ENCODE measurements at regions of chrX and their contacts with region 1.

Region 1: DNA sequence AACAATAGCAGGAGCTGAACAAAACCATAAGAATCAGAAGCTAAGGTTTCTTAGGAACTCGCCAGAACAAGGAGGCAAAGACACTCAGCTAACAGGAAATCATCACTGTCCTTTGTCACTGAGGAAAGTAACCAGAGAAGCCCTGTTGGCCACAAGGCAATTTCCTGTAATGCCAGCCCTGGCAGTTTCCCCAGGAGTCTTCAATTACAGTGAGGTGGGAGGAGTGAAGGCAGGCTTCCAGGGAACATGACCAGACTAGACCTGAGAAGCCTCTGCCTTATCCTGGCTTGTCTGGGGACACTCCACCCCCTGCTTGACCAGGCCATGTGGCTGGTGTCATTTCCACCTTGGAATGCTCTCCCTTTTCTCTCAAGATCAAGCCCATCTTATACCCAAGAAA is 125.3 kb downstream of the COL4A6 start:
- DNase-seq: no peak
- ATAC-seq: no peak
- H3K4me3 ChIP-seq: no peak overlapping the region
- H3K27ac ChIP-seq: no peak overlapping the region
- H3K4me1 ChIP-seq: no peaks in the 10 kb centered on the region
- H3K27me3 ChIP-seq: no peaks in the 10 kb centered on the region
- CTCF ChIP-seq: no peak
- EP300 ChIP-seq: no peak
- POLR2A ChIP-seq: no peak
- RAD21 ChIP-seq: no peak

Region 2: GRCh38 chrX:106976416-106976815 is 1336.5 kb before region 1 on chrX:
- CTCF ChIA-PET with region 1: no interaction called
- POLR2A ChIA-PET with region 1: no interaction called
- RAD21 ChIA-PET with region 1: no interaction called
- SMC1A ChIA-PET with region 1: no interaction called
- in situ Hi-C with region 1: no loop called
- intact Hi-C with region 1: no loop called
- DNase-seq: no peak
- ATAC-seq: no peak
- H3K4me3 ChIP-seq: no peak overlapping the region
- H3K27ac ChIP-seq: no peak overlapping the region
- H3K4me1 ChIP-seq: no peaks in the 10 kb centered on the region
- H3K27me3 ChIP-seq: no peaks in the 10 kb centered on the region
- CTCF ChIP-seq: no peak
- EP300 ChIP-seq: no peak
- POLR2A ChIP-seq: no peak
- RAD21 ChIP-seq: no peak

Region 3: DNA sequence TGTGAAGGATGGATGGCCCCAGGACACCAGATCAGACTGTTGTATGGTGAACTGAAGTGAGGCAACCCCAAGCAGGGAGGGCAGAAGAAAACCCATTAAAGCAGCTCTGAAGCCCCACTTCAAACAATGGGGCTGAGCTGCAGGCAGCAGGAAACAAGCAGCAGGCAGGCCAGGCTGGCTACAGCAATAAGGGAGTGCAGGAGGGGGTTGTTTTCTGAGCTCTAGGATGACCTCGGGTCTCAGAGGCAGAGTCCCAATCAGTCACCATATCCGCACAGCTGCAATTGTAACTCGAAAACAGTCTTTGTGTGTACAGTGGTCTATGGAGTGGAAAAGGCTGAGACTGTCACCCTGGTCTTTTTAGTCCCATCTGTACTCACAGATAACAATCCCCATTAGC is 34.9 kb after region 1 on chrX:
- CTCF ChIA-PET with region 1: no interaction called
- POLR2A ChIA-PET with region 1: no interaction called
- RAD21 ChIA-PET with region 1: no interaction called
- SMC1A ChIA-PET with region 1: no interaction called
- in situ Hi-C with region 1: no loop called
- intact Hi-C with region 1: loop called (anchors 1 kb)
- DNase-seq: no peak
- ATAC-seq: no peak
- H3K4me3 ChIP-seq: no peak overlapping the region
- H3K27ac ChIP-seq: no peak overlapping the region
- H3K4me1 ChIP-seq: no peaks in the 10 kb centered on the region
- H3K27me3 ChIP-seq: no peaks in the 10 kb centered on the region
- CTCF ChIP-seq: no peak
- EP300 ChIP-seq: no peak
- POLR2A ChIP-seq: no peak
- RAD21 ChIP-seq: no peak

Region 4: DNA sequence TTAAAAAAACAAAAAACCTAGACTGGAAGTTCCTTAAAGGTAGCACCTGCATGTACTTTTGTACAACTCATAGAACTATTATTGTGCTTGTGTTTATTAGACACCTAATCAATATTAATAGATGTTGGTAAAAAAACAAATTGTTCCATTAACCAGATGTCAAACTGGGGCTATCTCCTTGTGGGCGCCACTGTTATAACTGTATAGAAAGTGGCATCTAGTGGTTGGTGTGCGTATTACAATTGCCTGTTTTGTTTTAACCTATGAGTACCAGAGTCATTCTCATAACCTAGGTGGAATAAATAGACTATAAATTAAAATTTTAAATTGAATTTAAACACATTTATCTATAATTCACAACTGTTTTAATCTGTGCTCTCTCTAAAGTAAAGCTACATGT is 224.1 kb after region 1 on chrX:
- CTCF ChIA-PET with region 1: no interaction called
- POLR2A ChIA-PET with region 1: no interaction called
- RAD21 ChIA-PET with region 1: no interaction called
- SMC1A ChIA-PET with region 1: no interaction called
- in situ Hi-C with region 1: no loop called
- intact Hi-C with region 1: loop called (anchors 5 kb)
- DNase-seq: no peak
- ATAC-seq: peak; percentile 90
- H3K4me3 ChIP-seq: no peak overlapping the region
- H3K27ac ChIP-seq: no peak overlapping the region
- H3K4me1 ChIP-seq: no peaks in the 10 kb centered on the region
- H3K27me3 ChIP-seq: no peaks in the 10 kb centered on the region; a peak in 1 of 4 replicates
- CTCF ChIP-seq: peak; percentile 56 to 75 (median 67)
- EP300 ChIP-seq: no peak
- POLR2A ChIP-seq: no peak
- RAD21 ChIP-seq: peak; percentile 69